A549 (cell line): ENCODE measurements at regions of chr12 and their contacts with region 1.

Region 1: GRCh38 chr12:12562585-12563261 is at the start of gene DUSP16:
- DNase-seq: peak; percentile 88 to 95
- ATAC-seq: peak; percentile 86 to 93
- H3K4me3 ChIP-seq: peak within 1 kb of the TSS; percentile 93
- H3K27ac ChIP-seq: peak within 1 kb of the TSS; percentile 98
- H3K4me1 ChIP-seq: peaks cover 37% of the 10 kb centered on the region
- CTCF ChIP-seq: peak; percentile 10; the same call in 1 of the 3 replicates
- EP300 ChIP-seq: peak; percentile 16 to 63; a peak in 2 of 5 replicates
- POLR2A ChIP-seq: peak; percentile 44; the same call in 1 of the 2 replicates
- RAD21 ChIP-seq: peak in 1 of 2 experiments; percentile 39; a peak in 2 of 5 replicates
- polyA plus RNA-seq, gene DUSP16: 34.7 and 43.0 TPM in 2 replicates

Region 2: DNA sequence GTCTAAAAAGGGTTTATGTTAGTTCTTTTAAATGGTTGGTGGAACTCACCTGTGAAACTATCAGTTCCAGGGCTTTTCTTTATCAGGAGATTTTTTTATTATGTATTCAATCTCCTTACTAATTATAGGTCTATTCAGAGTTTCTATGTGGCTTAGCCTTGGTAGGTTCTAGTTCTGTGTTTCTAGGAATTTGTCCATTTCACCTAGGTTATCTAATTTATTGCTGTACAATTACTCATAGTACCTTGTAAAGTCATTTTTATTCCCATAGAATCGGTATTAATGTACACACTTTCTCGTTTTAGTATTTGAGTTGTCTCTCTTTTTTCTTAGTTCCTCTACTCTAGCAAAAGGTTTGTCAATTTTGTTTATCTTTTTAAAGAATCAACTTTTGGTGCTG is 146.8 kb before region 1 on chr12:
- CTCF ChIA-PET with region 1: no interaction called
- POLR2A ChIA-PET with region 1: no interaction called
- DNase-seq: no peak
- ATAC-seq: no peak
- H3K4me3 ChIP-seq: peak overlapping the region; percentile 40
- H3K27ac ChIP-seq: peak overlapping the region; percentile 75 to 82
- H3K4me1 ChIP-seq: peaks cover 19% of the 10 kb centered on the region
- CTCF ChIP-seq: no peak
- EP300 ChIP-seq: no peak
- POLR2A ChIP-seq: no peak
- RAD21 ChIP-seq: no peak

Region 3: GRCh38 chr12:12442548-12443071 is 120.1 kb before region 1 on chr12:
- CTCF ChIA-PET with region 1: no interaction called
- POLR2A ChIA-PET with region 1: no interaction called
- DNase-seq: peak in 1 of 2 experiments; percentile 12
- ATAC-seq: no peak; a peak in 1 of 6 replicates
- H3K4me3 ChIP-seq: no peak overlapping the region
- H3K27ac ChIP-seq: peak overlapping the region; percentile 67 to 84; a peak in 5 of 6 replicates
- H3K4me1 ChIP-seq: peaks cover 62% of the 10 kb centered on the region
- CTCF ChIP-seq: no peak
- EP300 ChIP-seq: no peak
- POLR2A ChIP-seq: no peak
- RAD21 ChIP-seq: no peak

Region 4: GRCh38 chr12:12521044-12521485 is 41.7 kb before region 1 on chr12:
- CTCF ChIA-PET with region 1: no interaction called
- POLR2A ChIA-PET with region 1: no interaction called
- DNase-seq: no peak
- ATAC-seq: no peak
- H3K4me3 ChIP-seq: no peak overlapping the region
- H3K27ac ChIP-seq: no peak overlapping the region
- H3K4me1 ChIP-seq: peaks cover 28% of the 10 kb centered on the region
- CTCF ChIP-seq: no peak
- EP300 ChIP-seq: no peak
- POLR2A ChIP-seq: no peak
- RAD21 ChIP-seq: no peak

Region 5: GRCh38 chr12:12540261-12541013 is 22.3 kb before region 1 on chr12:
- CTCF ChIA-PET with region 1: interaction called, 16 read pairs
- POLR2A ChIA-PET with region 1: no interaction called
- DNase-seq: no peak
- ATAC-seq: no peak
- H3K4me3 ChIP-seq: no peak overlapping the region
- H3K27ac ChIP-seq: peak overlapping the region in 1 of 2 experiments; percentile 56; a peak in 3 of 6 replicates
- H3K4me1 ChIP-seq: peaks cover 47% of the 10 kb centered on the region
- CTCF ChIP-seq: no peak
- EP300 ChIP-seq: no peak
- POLR2A ChIP-seq: no peak
- RAD21 ChIP-seq: no peak

Region 6: DNA sequence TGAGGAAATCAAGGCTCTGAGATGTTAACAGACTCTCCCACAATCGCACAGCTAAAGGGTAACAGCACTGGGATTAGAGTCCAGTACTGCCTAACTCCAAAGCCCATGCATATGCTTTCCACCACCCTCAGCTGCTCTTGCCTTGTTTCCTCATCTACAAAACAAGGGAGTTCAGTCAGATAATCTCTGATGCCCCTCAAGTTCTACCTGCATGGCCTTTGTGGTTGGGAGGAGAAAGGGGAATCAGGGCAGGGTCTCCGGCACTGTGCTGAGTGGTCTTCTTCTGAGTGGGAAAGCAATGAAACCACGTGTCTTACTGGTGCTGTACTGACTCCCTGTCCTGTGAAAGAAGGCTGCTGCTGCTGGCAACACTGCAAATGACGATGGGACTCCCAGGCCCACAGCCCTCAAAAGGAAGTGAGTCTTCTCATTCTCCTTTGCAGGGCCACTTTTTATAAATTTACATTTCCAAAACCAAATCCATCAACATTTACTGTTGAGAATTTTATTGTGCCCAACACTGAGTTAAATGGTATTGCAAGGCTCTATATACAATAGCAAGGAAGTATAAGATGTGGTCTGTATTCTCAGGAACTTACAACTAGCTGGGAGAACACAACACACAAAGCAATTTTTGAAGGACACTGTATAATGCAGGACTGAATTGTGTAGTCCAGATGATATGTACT is 19.6 kb after region 1 on chr12:
- CTCF ChIA-PET with region 1: interaction called, 15 read pairs
- POLR2A ChIA-PET with region 1: no interaction called
- DNase-seq: no peak
- ATAC-seq: peak; percentile 35 to 46; a peak in 3 of 6 replicates
- H3K4me3 ChIP-seq: no peak overlapping the region
- H3K27ac ChIP-seq: peak overlapping the region; percentile 89 to 92
- H3K4me1 ChIP-seq: peaks cover 45% of the 10 kb centered on the region
- CTCF ChIP-seq: no peak
- EP300 ChIP-seq: no peak
- POLR2A ChIP-seq: no peak
- RAD21 ChIP-seq: no peak

Region 7: GRCh38 chr12:12590975-12591374 is 28.3 kb after region 1 on chr12:
- CTCF ChIA-PET with region 1: interaction called, 14 read pairs
- POLR2A ChIA-PET with region 1: no interaction called
- DNase-seq: no peak
- ATAC-seq: no peak; a peak in 1 of 6 replicates
- H3K4me3 ChIP-seq: no peak overlapping the region
- H3K27ac ChIP-seq: peak overlapping the region in 1 of 2 experiments; percentile 16; a peak in 1 of 6 replicates
- H3K4me1 ChIP-seq: peaks cover 12% of the 10 kb centered on the region
- CTCF ChIP-seq: no peak
- EP300 ChIP-seq: no peak
- POLR2A ChIP-seq: no peak
- RAD21 ChIP-seq: no peak

Region 8: DNA sequence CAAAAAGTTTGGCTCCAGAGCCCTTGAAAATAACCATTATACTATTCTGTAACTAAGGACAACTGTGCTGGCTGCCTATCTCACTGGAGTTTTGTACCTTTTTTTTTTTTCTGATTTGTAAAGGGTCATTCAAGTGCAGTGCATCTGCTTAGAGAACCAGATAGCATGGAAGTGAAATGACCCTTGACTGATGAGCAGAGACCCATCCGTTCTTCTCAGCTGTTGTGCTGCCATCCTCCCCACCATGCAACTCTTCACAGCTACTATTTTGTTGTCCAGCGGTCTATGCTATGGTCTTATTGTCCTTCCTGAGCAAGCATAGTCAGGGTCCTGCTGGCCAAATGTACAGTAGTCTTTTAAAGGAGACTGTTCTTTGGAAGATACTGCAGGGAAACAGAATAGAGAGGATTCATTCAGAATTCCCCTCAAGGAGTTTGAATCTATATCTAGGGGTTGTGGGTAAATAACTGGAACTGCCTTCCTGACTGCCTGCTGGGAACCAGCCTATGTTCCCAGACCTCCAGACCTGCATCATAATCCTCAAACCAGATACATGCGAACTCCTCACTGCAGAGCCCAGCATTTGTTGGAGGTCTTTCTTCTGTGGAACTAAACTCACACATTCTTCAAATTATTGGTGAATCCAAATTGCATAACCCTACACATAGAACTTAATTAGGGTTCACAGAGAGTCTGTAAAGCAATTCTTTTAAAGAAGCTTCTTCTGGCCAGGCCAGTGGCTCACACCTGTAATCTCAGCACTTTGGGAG is 92.2 kb after region 1 on chr12:
- CTCF ChIA-PET with region 1: interaction called, 12 read pairs
- POLR2A ChIA-PET with region 1: no interaction called
- DNase-seq: no peak
- ATAC-seq: no peak
- H3K4me3 ChIP-seq: no peak overlapping the region
- H3K27ac ChIP-seq: no peak overlapping the region
- H3K4me1 ChIP-seq: peaks cover 4% of the 10 kb centered on the region; the same call in 2 of the 3 replicates
- CTCF ChIP-seq: no peak
- EP300 ChIP-seq: no peak
- POLR2A ChIP-seq: no peak
- RAD21 ChIP-seq: no peak

Region 9: DNA sequence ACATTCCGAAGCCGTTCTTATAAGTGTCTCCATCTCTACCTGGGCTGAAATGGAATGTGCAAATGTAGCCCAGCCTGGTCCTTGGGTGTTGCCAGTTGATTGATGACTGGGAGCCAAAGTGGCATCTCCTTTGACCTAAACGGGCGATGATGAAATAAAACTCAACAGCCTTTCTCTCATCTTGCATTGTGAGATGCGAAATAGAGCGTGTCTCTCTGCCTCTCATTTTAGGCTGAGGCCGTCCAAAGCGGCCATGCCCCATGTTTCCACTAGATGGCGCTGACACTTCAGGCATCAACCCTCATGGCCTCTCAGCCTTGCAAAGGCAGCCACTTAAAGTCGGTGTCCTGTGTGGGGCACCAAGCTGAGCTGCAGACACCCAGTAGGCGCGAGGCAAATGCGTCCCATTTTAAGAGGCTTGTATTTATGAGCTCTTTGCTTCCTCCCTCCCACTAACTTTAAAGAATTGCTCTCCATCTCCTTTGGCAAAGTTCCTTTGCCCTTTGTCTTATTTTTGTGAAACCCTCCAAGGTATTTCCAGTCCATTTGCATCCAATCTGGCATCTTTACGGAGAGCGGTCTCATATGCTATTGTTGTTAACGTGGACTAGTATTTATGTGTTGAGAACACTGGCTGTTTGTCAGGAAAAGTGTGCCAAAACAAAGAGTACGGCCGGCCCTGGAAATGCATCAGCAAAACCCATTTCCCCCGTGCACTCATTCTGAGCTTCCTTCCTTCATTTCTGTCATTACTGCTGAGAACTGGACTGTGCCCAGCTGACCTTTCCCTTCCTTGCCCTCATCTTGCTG is 353.6 kb after region 1 on chr12:
- CTCF ChIA-PET with region 1: no interaction called
- POLR2A ChIA-PET with region 1: no interaction called
- DNase-seq: peak; percentile 66 to 86
- ATAC-seq: peak; percentile 75 to 79
- H3K4me3 ChIP-seq: no peak overlapping the region
- H3K27ac ChIP-seq: peak overlapping the region; percentile 29 to 47; a peak in 4 of 6 replicates
- H3K4me1 ChIP-seq: peaks cover 49% of the 10 kb centered on the region
- CTCF ChIP-seq: peak; percentile 93
- EP300 ChIP-seq: no peak
- POLR2A ChIP-seq: no peak
- RAD21 ChIP-seq: peak; percentile 95 to 96